ENCODE measurements at regions of chr3 and their contacts with region 1.

Region 1: GRCh38 chr3:71016178-71016845 is 567.2 kb downstream of the FOXP1 start:
- DNase-seq: no peak
- ATAC-seq: no peak
- H3K4me3 ChIP-seq: no peak overlapping the region
- H3K27ac ChIP-seq: peak overlapping the region in 3 of 12 donors; percentile 13 to 53 (median 50)
- H3K4me1 ChIP-seq: peaks cover 0 to 53% (median 24%) of the 10 kb centered on the region in 12 donors
- H3K27me3 ChIP-seq: no peaks in the 10 kb centered on the region
- CTCF ChIP-seq: no peak
- POLR2A ChIP-seq: no peak

Region 2: GRCh38 chr3:70273492-70273891 is 742.8 kb before region 1 on chr3:
- intact Hi-C with region 1: no loop called
- DNase-seq: no peak
- ATAC-seq: no peak
- H3K4me3 ChIP-seq: no peak overlapping the region
- H3K27ac ChIP-seq: no peak overlapping the region
- H3K4me1 ChIP-seq: no peaks in the 10 kb centered on the region
- H3K27me3 ChIP-seq: no peaks in the 10 kb centered on the region
- CTCF ChIP-seq: no peak
- POLR2A ChIP-seq: no peak

Region 3: DNA sequence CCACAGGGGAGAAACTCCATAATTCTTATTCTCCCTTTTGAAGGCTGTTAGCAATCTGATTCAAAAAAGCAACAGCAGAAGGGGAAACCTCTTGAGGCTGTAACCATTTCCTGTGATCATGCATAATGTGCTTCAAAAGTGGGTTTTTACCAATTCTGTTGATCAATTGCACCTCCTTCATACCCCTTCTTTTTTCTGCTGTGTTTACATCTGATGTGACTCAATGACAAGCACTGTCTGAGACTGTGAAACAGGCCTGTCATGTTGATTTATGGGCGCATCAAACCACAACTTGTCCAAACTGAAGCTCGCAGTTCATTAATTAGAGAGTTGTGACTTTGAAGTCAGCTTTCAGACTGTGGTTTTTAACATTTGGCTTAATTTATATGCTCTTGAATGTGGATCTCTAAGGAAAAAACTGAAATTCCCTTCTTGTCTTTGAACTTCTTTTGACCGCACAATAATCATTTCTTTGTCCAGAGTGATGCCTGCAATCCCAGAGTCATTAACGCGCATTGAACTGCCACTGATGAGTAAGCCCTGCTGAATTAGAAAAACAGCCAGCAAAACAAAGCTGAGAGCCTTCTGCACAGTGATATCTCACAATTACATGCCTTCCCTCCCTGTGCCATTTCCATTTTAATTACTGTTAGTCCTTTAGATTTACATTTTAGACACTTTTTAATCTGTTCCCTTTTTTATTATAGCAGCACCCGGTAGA is 34.4 kb after region 1 on chr3:
- intact Hi-C with region 1: loop called in 1 of 10 experiments (anchors 5 kb)
- DNase-seq: no peak
- ATAC-seq: no peak
- H3K4me3 ChIP-seq: no peak overlapping the region
- H3K27ac ChIP-seq: peak overlapping the region in 11 of 12 donors; percentile 47 to 86 (median 74)
- H3K4me1 ChIP-seq: peaks cover 10 to 98% (median 86%) of the 10 kb centered on the region in 12 donors
- H3K27me3 ChIP-seq: no peaks in the 10 kb centered on the region
- CTCF ChIP-seq: no peak
- POLR2A ChIP-seq: no peak

Region 4: DNA sequence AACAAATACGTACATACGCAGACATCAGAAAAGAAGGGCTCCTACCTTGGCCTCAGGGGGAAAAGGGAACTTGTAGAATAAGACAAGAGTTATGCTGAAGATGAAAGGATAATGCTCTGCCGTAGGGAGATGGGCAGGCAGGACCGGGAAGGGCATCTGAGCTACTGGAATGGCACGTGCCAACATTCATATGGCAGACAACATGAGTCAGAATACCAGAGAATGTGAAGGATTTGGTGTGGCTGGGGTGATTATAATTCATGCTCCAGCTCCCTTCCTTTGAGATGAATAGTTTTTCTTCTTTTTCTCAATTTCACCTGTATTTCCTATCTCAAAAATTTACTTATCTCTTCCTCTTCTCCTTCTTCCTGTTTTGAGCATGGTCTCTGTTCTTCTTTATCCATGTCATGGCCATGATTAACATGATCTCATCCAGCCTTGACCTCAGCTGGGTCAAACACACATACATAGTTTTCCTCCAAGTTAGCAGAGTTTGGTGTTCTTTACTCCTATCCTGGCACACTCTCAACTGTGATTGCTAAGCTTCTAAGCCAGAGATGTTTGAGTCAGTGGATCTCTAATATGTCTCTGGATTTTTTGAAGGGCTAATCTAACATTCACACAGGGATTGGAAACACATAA is 60.2 kb after region 1 on chr3:
- intact Hi-C with region 1: no loop called
- DNase-seq: no peak
- ATAC-seq: peak in 1 of 4 donors; percentile 26
- H3K4me3 ChIP-seq: no peak overlapping the region
- H3K27ac ChIP-seq: no peak overlapping the region
- H3K4me1 ChIP-seq: peaks cover 0 to 41% (median 14%) of the 10 kb centered on the region in 12 donors
- H3K27me3 ChIP-seq: no peaks in the 10 kb centered on the region
- CTCF ChIP-seq: no peak
- POLR2A ChIP-seq: no peak